Activated CD8-positive, alpha-beta T cell treated with anti-CD3 and anti-CD28 coated beads, Interleukin-2, amount 10 ng/mL, durations not matched to agents 7 days and 5 days (primary cell): ENCODE measurements at regions of chr15 and their contacts with region 1.

Region 1: DNA sequence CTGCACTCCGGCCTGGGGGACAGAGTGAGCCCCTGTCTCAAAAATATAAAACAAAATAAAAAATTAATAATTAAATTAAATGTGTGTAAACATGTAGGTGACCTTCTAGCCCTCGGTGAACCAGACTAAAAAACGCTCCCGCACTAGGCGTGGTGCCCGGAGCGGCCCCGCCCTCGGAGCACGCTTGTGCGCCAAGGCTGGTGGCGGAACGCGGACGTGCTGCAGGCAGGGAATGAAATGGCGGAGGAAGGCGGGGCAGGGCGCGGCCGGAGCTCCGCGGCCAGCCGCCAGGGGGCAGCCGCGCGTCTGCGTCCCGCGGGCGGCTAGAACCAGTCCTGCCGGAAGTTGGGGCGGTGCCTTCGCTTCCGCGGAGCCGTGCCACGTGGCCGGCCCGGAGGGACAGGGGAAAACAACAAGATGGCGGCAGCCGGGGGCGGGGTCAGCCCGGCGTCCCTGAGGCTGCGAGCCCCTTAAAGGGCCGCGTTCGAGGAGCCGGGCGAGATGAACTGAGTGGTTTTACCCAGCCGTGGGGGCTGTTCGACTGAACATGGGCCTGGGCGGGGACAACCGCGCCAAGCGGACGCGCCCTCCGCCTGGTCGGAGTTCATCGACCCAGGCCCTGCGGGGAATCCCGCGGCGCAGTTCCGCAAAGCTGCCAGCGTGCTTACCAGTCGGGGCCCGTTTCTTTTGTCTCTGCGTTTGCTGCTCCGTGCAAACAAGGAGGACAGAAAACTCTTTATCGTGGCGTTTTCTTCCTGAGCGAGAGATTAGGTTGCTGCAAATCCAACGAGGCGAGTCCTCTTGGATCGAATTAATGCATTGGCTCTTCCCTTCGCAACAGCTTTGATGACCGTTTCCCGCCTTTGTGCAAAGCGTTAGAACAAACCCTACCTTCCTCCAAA is 90.9 kb upstream of the CHD2 start:
- DNase-seq: peak; percentile 99
- ATAC-seq: peak; percentile 86
- H3K4me3 Mint-ChIP-seq: peak overlapping the region; percentile 81
- H3K27ac Mint-ChIP-seq: peak overlapping the region; percentile 96
- H3K4me1 Mint-ChIP-seq: peaks cover 50% of the 10 kb centered on the region
- H3K27me3 Mint-ChIP-seq: no peaks in the 10 kb centered on the region

Region 2: GRCh38 chr15:92751524-92751923 is 57.7 kb before region 1 on chr15:
- CTCF ChIA-PET with region 1: no interaction called
- POLR2A ChIA-PET with region 1: no interaction called
- DNase-seq: no peak
- ATAC-seq: no peak
- H3K4me3 Mint-ChIP-seq: no peak overlapping the region
- H3K27ac Mint-ChIP-seq: no peak overlapping the region
- H3K4me1 Mint-ChIP-seq: no peaks in the 10 kb centered on the region
- H3K27me3 Mint-ChIP-seq: peaks cover 2% of the 10 kb centered on the region

Region 3: DNA sequence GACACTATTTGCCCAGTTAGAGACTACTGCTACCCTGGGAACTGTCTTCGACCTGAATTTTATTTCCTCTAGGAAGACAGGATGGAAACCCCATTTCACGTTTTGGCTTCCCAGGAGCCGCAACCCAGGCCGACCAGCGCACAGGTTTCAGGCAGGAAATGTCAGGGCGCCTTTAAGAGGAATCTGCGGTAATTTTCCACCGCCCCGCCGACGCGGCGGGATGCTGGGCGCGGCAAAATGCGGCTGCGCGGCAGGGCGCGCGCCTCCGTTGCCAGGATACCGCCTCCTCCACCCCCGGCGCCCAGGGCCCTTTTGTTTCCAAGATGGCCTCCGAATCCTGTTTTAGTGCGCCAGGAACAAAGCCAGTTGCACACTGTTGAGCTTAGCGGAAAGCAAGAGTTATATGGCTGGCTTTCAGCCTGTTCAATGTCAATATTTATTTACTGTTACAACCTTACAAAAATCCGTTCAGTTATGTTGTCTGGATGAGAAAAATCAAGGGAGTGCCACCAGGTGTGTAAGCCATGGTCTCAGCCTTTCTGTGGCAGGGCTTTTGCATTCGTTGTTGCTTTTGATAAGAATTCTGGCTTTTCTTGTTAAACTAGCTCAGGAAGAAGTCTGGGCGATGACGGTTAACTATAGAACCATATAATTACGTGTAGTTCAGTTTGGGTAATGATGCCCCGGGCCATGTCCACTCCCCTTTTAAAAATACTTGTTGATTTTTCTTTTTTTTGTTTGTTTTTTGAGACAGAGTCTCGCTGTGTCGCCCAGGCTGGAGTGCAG is 11.2 kb after region 1 on chr15:
- CTCF ChIA-PET with region 1: interaction called, 33 read pairs
- POLR2A ChIA-PET with region 1: interaction called, 55 read pairs
- DNase-seq: peak; percentile 89
- ATAC-seq: peak; percentile 85
- H3K4me3 Mint-ChIP-seq: peak overlapping the region; percentile 75
- H3K27ac Mint-ChIP-seq: peak overlapping the region; percentile 79
- H3K4me1 Mint-ChIP-seq: peaks cover 58% of the 10 kb centered on the region
- H3K27me3 Mint-ChIP-seq: no peaks in the 10 kb centered on the region

Region 4: DNA sequence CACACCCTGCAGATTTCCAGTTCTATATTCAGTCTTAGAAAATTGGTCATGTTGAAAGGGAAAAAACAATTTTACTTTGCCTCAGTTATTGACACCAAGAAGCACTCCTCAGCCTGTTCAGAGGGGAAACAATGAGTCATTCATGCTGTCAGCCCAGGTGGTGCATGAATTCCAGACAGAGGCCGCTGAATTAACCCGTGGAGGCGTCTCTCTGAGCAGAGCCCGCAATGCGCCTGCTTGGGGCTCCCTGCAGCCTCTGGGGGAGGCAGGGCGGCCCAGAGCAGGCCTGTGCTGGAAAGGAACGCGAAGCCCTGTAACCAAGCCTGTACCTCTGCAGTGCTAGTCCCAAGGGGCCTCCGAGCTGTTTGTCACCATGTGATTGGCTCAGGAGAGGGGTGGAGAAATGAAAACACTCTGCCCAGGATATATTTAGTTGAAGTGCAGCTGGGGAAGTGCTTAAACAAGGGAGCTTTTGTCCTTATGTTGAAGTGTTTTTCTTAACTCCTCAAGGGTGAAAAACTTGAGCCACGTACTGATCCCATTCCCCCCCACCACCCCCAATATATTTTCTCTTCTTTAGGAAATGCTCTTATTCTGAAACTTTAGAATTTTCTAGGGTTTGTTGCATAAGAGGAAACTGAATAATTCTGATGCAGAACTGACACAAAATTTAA is 22.6 kb after region 1 on chr15:
- CTCF ChIA-PET with region 1: interaction called, 59 read pairs
- POLR2A ChIA-PET with region 1: interaction called, 106 read pairs
- DNase-seq: peak; percentile 94
- ATAC-seq: peak; percentile 99
- H3K4me3 Mint-ChIP-seq: peak overlapping the region; percentile 73
- H3K27ac Mint-ChIP-seq: peak overlapping the region; percentile 95
- H3K4me1 Mint-ChIP-seq: peaks cover 56% of the 10 kb centered on the region
- H3K27me3 Mint-ChIP-seq: no peaks in the 10 kb centered on the region

Region 5: GRCh38 chr15:92896561-92896960 is 87.3 kb after region 1 on chr15:
- CTCF ChIA-PET with region 1: interaction called, 22 read pairs
- POLR2A ChIA-PET with region 1: interaction called, 178 read pairs
- DNase-seq: no peak
- ATAC-seq: no peak
- H3K4me3 Mint-ChIP-seq: peak overlapping the region; percentile 26
- H3K27ac Mint-ChIP-seq: peak overlapping the region; percentile 45
- H3K4me1 Mint-ChIP-seq: peaks cover 68% of the 10 kb centered on the region
- H3K27me3 Mint-ChIP-seq: no peaks in the 10 kb centered on the region

Region 6: GRCh38 chr15:92903941-92904831 is 95.0 kb after region 1 on chr15:
- CTCF ChIA-PET with region 1: interaction called, 39 read pairs
- POLR2A ChIA-PET with region 1: interaction called, 178 read pairs
- DNase-seq: peak; percentile 99
- ATAC-seq: peak; percentile 87
- H3K4me3 Mint-ChIP-seq: peak overlapping the region; percentile 83
- H3K27ac Mint-ChIP-seq: peak overlapping the region; percentile 98
- H3K4me1 Mint-ChIP-seq: peaks cover 57% of the 10 kb centered on the region
- H3K27me3 Mint-ChIP-seq: no peaks in the 10 kb centered on the region

Region 7: DNA sequence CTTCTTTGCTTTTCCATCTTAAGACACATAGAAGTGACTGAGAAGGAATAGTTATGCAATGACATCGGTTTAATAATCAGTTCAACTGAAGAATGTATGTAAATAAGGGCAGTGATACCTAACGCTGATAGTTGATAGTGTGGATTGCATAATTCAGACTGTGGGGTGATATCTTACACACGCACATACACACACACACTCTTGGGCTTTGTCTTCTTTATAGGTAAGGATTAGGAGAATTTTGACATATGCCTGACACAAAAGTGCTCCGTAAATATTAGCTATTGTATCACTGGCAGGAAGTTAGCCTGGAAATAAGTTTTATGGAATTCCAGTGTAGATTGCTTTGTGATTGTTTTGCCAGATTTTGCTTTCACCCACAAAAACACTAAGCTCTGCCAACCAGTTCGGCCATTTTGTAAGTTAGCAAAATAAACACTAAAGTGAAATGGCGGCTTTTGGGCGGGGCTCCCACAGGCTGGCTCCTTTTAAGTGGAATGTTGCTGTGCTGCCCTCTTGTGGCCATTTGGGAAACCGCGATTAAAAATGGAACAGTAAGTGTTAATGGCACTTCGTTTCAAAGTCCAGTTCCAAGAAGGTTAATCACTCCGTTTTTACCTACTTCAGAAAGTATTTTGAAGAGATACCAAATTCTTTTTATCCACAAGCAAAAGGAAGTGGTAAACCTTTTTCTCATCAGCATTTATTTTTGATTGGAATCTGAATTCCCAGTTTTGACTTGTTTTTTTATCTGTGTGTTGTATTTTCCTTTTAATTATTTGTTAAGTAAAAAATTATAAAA is 108.6 kb after region 1 on chr15:
- CTCF ChIA-PET with region 1: interaction called, 90 read pairs
- POLR2A ChIA-PET with region 1: interaction called, 105 read pairs
- DNase-seq: peak; percentile 97
- ATAC-seq: peak; percentile 36
- H3K4me3 Mint-ChIP-seq: peak overlapping the region; percentile 12
- H3K27ac Mint-ChIP-seq: peak overlapping the region; percentile 79
- H3K4me1 Mint-ChIP-seq: peaks cover 84% of the 10 kb centered on the region
- H3K27me3 Mint-ChIP-seq: no peaks in the 10 kb centered on the region

Region 8: DNA sequence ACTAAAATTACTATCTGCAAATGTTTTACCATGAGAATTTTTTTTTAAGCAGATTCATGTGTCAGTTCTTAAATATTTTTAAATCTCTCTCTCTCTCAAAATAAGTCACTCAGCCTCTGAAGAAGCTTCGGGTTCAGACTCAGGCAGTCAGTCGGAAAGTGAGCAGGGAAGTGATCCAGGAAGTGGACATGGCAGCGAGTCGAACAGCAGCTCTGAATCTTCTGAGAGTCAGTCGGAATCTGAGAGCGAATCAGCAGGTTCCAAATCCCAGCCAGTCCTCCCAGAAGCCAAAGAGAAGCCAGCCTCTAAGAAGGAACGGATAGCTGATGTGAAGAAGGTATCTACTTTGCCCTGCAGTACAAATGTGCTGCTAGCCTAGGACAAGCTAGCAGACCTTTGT is 115.0 kb after region 1 on chr15:
- CTCF ChIA-PET with region 1: interaction called, 90 read pairs
- POLR2A ChIA-PET with region 1: interaction called, 105 read pairs
- DNase-seq: no peak
- ATAC-seq: no peak
- H3K4me3 Mint-ChIP-seq: no peak overlapping the region
- H3K27ac Mint-ChIP-seq: peak overlapping the region; percentile 32
- H3K4me1 Mint-ChIP-seq: peaks cover 63% of the 10 kb centered on the region
- H3K27me3 Mint-ChIP-seq: no peaks in the 10 kb centered on the region

Region 9: GRCh38 chr15:93378558-93378957 is 569.3 kb after region 1 on chr15:
- CTCF ChIA-PET with region 1: no interaction called
- POLR2A ChIA-PET with region 1: no interaction called
- DNase-seq: no peak
- ATAC-seq: no peak
- H3K4me3 Mint-ChIP-seq: no peak overlapping the region
- H3K27ac Mint-ChIP-seq: no peak overlapping the region
- H3K4me1 Mint-ChIP-seq: no peaks in the 10 kb centered on the region
- H3K27me3 Mint-ChIP-seq: peaks cover 2% of the 10 kb centered on the region